ENCODE measurements at regions of chr1 and their contacts with region 1.

Region 1: GRCh38 chr1:225754940-225755641 is 22.5 kb upstream of the SRP9 start:
- DNase-seq: no peak
- H3K27ac ChIP-seq: peak overlapping the region; percentile 47; the same call in 1 of the 2 replicates
- CTCF ChIP-seq: no peak

Region 2: DNA sequence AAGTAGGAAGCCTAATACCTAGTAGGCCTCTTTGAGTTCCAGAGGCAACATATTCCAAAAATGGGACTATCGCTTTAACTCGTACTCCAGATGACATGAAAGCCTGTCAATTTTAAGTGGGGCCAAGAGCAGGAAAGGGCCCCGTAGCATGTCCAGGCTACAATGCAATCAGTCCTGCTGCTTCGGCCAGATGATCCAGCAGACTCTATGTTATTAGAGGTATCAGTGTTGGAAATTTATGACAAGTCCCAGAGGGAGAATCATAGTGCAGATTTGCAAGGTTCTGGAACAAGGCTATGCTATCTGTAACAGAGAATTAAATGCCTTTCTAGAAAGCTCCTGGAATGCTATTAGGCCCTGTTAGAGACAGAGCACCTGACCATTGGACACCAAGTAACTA is 34.2 kb before region 1 on chr1:
- CTCF ChIA-PET with region 1: no interaction called
- POLR2A ChIA-PET with region 1: no interaction called
- DNase-seq: no peak
- H3K27ac ChIP-seq: no peak overlapping the region
- CTCF ChIP-seq: no peak

Region 3: DNA sequence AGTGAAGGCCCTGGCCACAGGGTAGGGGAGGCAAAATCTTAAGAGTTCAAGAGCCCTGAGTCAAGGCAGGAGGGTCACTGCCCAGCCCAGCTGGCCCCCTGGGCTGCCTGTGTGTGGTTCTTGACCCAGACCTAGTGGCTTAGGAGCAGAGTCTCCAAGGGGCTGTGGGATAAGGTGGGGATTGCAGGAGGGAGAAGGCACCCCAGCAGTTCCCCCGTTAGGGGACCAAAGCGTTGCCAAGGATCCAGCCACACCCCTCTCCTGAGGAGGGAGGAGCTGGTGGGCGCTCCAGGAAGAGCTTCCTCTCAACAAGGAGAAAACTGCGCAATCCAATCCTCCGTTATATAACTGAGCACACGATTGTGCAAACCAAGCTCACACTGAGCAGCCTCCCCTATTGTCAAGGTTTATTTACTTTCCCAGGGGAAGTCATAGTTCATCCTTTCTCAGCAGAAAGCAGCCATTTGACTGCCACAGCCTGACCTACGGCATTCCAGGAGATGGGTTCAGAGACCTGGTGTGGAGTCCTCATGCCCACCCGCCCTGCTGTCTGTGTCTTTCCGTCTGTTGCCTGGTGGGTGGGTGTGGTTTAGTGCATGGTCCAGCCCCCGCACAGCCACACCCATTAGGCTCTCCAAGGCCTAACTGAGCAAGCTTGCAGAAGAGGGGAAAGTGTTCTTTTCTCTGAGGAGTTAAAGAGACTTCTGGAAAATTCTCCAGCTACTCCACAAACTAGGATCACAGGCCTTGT is 58.3 kb after region 1 on chr1:
- CTCF ChIA-PET with region 1: no interaction called
- POLR2A ChIA-PET with region 1: interaction called, 14 read pairs
- DNase-seq: peak; percentile 49
- H3K27ac ChIP-seq: peak overlapping the region; percentile 93
- CTCF ChIP-seq: no peak